Heart left ventricle (tissue), 16 donors: ENCODE measurements at regions of chr17 and their contacts with region 1.

Region 1: GRCh38 chr17:75940724-75941441 is at the start of gene FBF1:
- DNase-seq: peak; percentile 94 to 97 (median 96)
- ATAC-seq: peak; percentile 97 to 100 (median 99)
- H3K4me3 ChIP-seq: peak within 1 kb of the TSS; percentile 58 to 96 (median 81)
- H3K27ac ChIP-seq: peak within 1 kb of the TSS in 11 of 12 donors; percentile 45 to 89 (median 74)
- H3K4me1 ChIP-seq: peaks cover 0 to 15% (median 9%) of the 10 kb centered on the region in 12 donors
- H3K27me3 ChIP-seq: no peaks in the 10 kb centered on the region
- CTCF ChIP-seq: peak in 3 of 12 donors; percentile 6 to 28 (median 9)
- POLR2A ChIP-seq: peak; percentile 28 to 93
- total RNA-seq, gene FBF1: 1.5 to 5.4 (median 2.9) TPM

Region 2: DNA sequence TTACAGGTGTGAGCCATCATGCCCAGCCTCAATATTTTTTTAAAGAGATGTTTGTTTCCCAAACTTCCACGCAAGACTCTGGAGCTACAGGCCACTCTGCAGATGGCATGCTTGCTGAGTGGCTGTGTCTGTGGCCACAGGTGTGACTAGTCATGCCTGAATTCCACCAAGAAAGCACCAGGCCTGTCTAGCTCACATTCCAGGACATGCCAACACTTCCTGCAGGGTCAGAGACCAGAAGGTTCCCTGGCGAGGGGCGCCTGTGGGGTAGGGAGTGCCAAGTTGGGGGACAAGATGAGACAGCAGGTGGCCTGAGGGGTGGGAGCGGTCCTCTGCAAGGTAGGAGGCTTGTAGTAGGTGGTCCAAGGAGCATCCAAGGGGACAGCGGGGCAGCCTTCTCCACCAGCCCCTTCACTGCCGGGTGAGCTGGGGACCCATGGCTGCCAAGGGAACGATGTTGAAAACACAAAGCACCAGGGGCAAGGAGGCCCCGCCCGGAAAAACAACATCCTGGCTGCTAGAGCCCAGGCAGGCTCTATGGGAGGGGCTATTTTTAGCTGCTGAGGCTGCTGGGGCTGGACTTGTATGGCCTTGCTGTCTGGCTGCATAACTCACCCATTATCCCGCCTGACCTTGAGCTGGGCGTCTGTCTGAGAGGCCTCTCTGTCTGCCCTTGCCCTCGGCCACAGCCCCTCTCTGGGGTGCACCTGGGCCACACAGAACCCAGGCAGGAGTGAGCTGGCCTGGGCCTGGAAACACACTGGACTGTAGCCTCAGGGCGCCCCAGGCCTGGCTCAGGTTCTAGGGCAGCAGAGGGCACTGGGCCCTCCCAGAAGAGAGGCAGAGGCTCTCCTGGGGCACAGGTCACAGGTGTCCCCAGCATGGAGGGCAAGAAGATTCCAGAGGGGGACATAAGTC is 68.2 kb before region 1 on chr17:
- intact Hi-C with region 1: no loop called
- DNase-seq: peak; percentile 86 to 95 (median 90)
- ATAC-seq: peak; percentile 55 to 77 (median 66)
- H3K4me3 ChIP-seq: no peak overlapping the region
- H3K27ac ChIP-seq: peak overlapping the region; percentile 66 to 99 (median 92)
- H3K4me1 ChIP-seq: peaks cover 17 to 88% (median 59%) of the 10 kb centered on the region in 12 donors
- H3K27me3 ChIP-seq: no peaks in the 10 kb centered on the region
- CTCF ChIP-seq: no peak
- POLR2A ChIP-seq: peak in 1 of 2 donors; percentile 56

Region 3: GRCh38 chr17:75978938-75979704 is 38.2 kb after region 1 on chr17 and contains the starts of genes ACOX1 and TEN1:
- intact Hi-C with region 1: loop called in 2 of 10 experiments (anchors 5 kb)
- DNase-seq: peak; percentile 98 to 99 (median 99)
- ATAC-seq: peak; percentile 97 to 99 (median 98)
- H3K4me3 ChIP-seq: peak within 1 kb of the TSS; percentile 59 to 93 (median 79)
- H3K27ac ChIP-seq: peak within 1 kb of the TSS; percentile 92 to 100 (median 98)
- H3K4me1 ChIP-seq: peaks cover 0 to 64% (median 35%) of the 10 kb centered on the region in 12 donors
- H3K27me3 ChIP-seq: no peaks in the 10 kb centered on the region
- CTCF ChIP-seq: peak in 11 of 12 donors; percentile 8 to 64 (median 34)
- POLR2A ChIP-seq: peak; percentile 25 to 94
- total RNA-seq, gene ACOX1: 65.5 to 117 (median 84.8) TPM
- total RNA-seq, gene TEN1: 3.3 to 15.6 (median 8.6) TPM

Region 4: GRCh38 chr17:76072148-76072858 is 131.4 kb after region 1 on chr17 and contains the start of gene SRP68:
- intact Hi-C with region 1: loop called in 1 of 10 experiments (anchors 10 kb)
- DNase-seq: peak; percentile 92 to 96 (median 94)
- ATAC-seq: peak; percentile 98 to 100 (median 100)
- H3K4me3 ChIP-seq: peak within 1 kb of the TSS; percentile 56 to 93 (median 80)
- H3K27ac ChIP-seq: peak within 1 kb of the TSS in 11 of 12 donors; percentile 37 to 83 (median 69)
- H3K4me1 ChIP-seq: peaks cover 3 to 59% (median 40%) of the 10 kb centered on the region in 12 donors
- H3K27me3 ChIP-seq: peaks cover 25 to 40% (median 39%) of the 10 kb centered on the region in 9 donors
- CTCF ChIP-seq: peak in 1 of 12 donors; percentile 26
- POLR2A ChIP-seq: peak in 1 of 2 donors; percentile 55
- total RNA-seq, gene SRP68: 33.2 to 66.8 (median 59.4) TPM

Region 5: DNA sequence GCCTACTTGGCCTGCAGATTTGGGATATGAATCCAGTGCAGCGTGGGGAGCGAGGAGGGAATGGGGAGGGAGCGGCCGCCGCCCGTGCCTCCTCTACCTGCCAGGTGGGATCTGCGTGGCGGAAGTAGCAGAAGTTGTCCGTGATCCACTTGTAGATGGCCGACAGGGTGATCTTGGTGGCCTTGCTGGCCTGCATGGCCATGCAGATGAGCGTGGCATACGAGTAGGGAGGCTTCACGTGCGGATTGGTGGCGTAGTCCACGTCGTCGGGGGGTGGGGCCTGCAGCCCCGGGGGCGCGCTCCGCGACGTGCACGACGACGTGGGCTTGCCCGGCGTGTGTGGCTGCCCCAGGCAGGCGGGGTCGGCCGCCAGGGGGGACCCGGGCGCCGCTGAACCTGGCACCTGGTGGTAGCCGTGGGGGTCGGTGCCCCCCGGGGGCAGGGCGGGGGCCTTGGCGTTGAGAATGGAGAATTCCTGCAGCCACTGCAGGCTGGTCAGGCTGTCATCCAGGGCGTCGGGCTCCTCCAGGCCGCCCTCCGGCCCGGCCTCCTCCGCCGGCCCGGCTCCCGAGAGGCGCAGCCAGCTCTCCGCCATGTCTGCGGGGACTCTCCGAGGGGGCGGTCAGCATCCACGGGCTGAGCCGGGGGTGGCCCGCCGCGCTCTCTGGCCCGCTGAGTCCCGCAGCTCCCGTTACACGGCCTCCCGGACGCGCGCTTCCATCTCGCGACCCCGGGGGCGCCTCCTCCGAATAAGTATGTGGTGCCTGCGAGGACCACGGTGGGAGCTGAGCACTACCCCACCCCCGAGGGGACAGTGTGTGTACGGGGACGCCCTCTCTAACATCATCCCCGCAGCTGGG is 199.1 kb after region 1 on chr17:
- intact Hi-C with region 1: no loop called
- DNase-seq: peak in 1 of 5 donors; percentile 23
- ATAC-seq: no peak
- H3K4me3 ChIP-seq: peak overlapping the region in 8 of 12 donors; percentile 5 to 60 (median 15)
- H3K27ac ChIP-seq: no peak overlapping the region
- H3K4me1 ChIP-seq: peaks cover 6 to 51% (median 32%) of the 10 kb centered on the region in 12 donors
- H3K27me3 ChIP-seq: peaks cover 36 to 60% (median 55%) of the 10 kb centered on the region in 9 donors
- CTCF ChIP-seq: no peak
- POLR2A ChIP-seq: no peak